Ascending aorta (tissue), 2 donors: ENCODE measurements at regions of chr3 and their contacts with region 1.

Region 1: DNA sequence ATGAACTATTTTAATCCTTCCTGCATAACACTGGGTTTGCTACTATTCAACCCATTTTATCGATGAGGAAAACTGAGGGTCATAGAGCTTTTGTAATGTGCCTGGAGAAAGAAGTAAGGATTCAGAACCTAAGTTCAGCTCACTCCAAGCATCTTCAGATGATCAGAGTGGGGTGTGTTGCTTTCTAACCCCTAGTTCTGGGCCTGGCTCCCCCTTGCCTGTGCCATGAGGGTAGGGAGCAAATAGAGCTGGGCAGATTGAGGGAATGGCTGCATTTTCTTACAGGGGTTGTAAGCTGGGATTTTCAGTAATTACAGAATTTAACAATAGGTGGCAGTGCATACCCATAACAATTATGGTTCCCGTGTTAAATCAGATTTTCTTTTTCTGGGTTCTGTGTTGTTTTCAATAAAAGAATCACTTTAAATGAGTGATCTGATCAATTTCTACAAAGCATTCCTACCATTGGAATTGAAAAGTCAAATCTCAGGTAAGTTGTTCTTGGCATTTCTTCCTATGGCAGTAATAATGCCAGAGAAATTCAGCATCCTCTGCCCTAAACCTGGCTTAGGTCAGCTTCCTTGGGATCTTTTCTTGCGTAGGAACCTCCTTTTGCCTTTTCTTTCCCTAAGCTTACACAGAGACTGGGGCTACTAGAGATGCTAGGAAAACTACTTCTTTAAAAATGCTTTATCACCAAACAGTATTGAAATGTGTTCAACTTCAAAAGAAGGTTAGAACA is 103.8 kb upstream of the IL12A start:
- DNase-seq: no peak
- H3K4me3 ChIP-seq: no peak overlapping the region
- H3K27ac ChIP-seq: no peak overlapping the region
- H3K4me1 ChIP-seq: peaks cover 0 to 13% of the 10 kb centered on the region in 2 donors
- H3K27me3 ChIP-seq: no peaks in the 10 kb centered on the region
- CTCF ChIP-seq: peak in 2 of 3 experiments; percentile 29 to 49

Region 2: GRCh38 chr3:159503944-159504343 is 380.9 kb before region 1 on chr3:
- intact Hi-C with region 1: no loop called
- DNase-seq: no peak
- H3K4me3 ChIP-seq: no peak overlapping the region
- H3K27ac ChIP-seq: no peak overlapping the region
- H3K4me1 ChIP-seq: no peaks in the 10 kb centered on the region
- H3K27me3 ChIP-seq: no peaks in the 10 kb centered on the region
- CTCF ChIP-seq: no peak

Region 3: DNA sequence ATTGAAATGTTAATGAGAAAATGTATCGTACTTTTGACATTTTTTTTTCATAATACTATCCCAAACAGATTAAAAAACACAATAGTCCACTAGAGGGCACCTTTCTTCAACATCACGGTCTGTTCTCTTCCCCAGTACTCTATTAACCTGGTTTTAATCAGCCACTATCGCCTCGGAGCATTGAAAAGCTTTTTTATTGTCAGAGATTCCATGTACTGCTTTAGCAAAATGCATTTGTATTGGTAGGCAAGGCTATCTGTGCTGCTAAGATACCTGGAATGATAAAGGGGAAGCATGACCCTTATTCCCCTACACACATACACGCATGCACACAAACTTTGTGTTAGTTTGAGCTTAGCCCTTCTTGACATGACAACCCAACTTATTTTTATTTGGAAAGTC is 56.3 kb before region 1 on chr3:
- intact Hi-C with region 1: loop called (anchors 5 kb)
- DNase-seq: no peak
- H3K4me3 ChIP-seq: no peak overlapping the region
- H3K27ac ChIP-seq: no peak overlapping the region
- H3K4me1 ChIP-seq: peaks cover 5 to 28% of the 10 kb centered on the region in 2 donors
- H3K27me3 ChIP-seq: no peaks in the 10 kb centered on the region
- CTCF ChIP-seq: peak in 2 of 3 experiments; percentile 43 to 51

Region 4: DNA sequence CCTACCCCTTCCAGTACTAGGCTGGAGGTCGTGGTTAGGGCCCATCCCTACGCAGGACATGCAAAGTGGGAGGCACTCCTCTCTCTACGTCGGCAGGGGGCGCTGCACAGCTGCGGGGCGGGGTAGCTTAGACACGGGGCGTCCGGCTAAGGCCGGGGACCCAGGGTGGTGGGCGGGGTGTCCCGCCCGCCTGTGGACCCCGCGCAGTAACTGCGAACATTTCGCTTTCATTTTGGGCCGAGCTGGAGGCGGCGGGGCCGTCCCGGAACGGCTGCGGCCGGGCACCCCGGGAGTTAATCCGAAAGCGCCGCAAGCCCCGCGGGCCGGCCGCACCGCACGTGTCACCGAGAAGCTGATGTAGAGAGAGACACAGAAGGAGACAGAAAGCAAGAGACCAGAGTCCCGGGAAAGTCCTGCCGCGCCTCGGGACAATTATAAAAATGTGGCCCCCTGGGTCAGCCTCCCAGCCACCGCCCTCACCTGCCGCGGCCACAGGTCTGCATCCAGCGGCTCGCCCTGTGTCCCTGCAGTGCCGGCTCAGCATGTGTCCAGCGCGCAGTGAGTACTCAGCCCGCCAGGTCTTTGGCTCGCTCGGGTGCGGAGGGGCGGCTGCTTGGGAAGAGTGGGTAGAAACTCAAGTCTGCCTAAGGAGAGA is 103.9 kb after region 1 on chr3 and contains the start of gene IL12A:
- intact Hi-C with region 1: loop called (anchors 5 kb)
- DNase-seq: peak in 1 of 2 donors; percentile 81
- H3K4me3 ChIP-seq: peak within 1 kb of the TSS; percentile 53 to 86
- H3K27ac ChIP-seq: no peak within 1 kb of the TSS
- H3K4me1 ChIP-seq: peaks cover 0 to 3% of the 10 kb centered on the region in 2 donors
- H3K27me3 ChIP-seq: no peaks in the 10 kb centered on the region
- CTCF ChIP-seq: peak; percentile 75 to 90 (median 87)
- total RNA-seq, gene IL12A: not detected

Region 5: DNA sequence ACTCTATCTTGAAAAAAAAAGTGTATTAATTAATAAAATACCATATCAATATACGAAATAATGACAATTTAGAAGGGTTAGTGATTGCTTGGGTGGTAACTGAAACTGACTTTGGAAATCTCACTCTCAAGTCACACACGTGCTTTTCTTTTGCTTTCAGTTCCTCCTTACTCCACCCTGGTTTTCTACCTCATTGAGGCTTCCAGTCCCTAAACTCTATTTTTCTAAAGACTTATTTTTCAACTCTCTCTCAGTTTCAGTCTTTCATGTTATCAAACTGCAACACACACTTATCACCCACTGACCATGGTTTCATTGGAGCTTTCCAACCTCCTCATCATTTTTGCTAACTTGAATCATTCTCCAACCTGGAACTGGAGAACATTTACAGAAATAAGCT is 127.3 kb after region 1 on chr3:
- intact Hi-C with region 1: no loop called
- DNase-seq: no peak
- H3K4me3 ChIP-seq: no peak overlapping the region
- H3K27ac ChIP-seq: no peak overlapping the region
- H3K4me1 ChIP-seq: no peaks in the 10 kb centered on the region
- H3K27me3 ChIP-seq: no peaks in the 10 kb centered on the region
- CTCF ChIP-seq: no peak

Region 6: DNA sequence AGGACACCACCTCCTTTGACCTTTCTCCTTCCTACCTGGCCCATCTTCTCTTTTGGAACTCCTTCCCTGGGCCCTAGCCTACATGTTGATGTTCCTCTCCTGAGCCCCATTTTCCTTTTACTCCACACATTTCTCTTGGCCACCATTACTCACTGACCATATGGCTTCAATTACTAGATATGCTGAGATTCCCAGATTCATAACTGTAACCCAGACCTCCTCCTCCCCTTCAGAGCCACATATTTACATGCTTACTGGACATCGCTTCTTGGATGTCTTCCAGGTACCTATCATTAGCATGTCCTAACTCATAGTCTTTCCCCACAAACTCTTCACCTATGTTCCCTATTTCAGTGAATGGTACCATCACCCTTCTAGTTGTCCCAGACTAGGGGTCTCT is 589.1 kb after region 1 on chr3:
- intact Hi-C with region 1: no loop called
- DNase-seq: no peak
- H3K4me3 ChIP-seq: no peak overlapping the region
- H3K27ac ChIP-seq: no peak overlapping the region
- H3K4me1 ChIP-seq: no peaks in the 10 kb centered on the region
- H3K27me3 ChIP-seq: no peaks in the 10 kb centered on the region
- CTCF ChIP-seq: no peak